OCI-LY7 (cell line): ENCODE measurements at regions of chr20 and their contacts with region 1.

Region 1: GRCh38 chr20:31684153-31685015 is 38.3 kb downstream of the BCL2L1 start:
- DNase-seq: peak; percentile 95
- H3K4me3 ChIP-seq: peak overlapping the region; percentile 49
- H3K27ac ChIP-seq: peak overlapping the region; percentile 100
- H3K4me1 ChIP-seq: peaks cover 95% of the 10 kb centered on the region
- CTCF ChIP-seq: no peak

Region 2: GRCh38 chr20:31661625-31662371 is 22.6 kb before region 1 on chr20:
- CTCF ChIA-PET with region 1: interaction called, 8 read pairs
- POLR2A ChIA-PET with region 1: interaction called, 28 read pairs
- intact Hi-C with region 1: loop called (anchors 1 kb)
- DNase-seq: peak; percentile 83
- H3K4me3 ChIP-seq: peak overlapping the region; percentile 53
- H3K27ac ChIP-seq: peak overlapping the region; percentile 64
- H3K4me1 ChIP-seq: peaks cover 37% of the 10 kb centered on the region
- CTCF ChIP-seq: peak; percentile 74

Region 3: DNA sequence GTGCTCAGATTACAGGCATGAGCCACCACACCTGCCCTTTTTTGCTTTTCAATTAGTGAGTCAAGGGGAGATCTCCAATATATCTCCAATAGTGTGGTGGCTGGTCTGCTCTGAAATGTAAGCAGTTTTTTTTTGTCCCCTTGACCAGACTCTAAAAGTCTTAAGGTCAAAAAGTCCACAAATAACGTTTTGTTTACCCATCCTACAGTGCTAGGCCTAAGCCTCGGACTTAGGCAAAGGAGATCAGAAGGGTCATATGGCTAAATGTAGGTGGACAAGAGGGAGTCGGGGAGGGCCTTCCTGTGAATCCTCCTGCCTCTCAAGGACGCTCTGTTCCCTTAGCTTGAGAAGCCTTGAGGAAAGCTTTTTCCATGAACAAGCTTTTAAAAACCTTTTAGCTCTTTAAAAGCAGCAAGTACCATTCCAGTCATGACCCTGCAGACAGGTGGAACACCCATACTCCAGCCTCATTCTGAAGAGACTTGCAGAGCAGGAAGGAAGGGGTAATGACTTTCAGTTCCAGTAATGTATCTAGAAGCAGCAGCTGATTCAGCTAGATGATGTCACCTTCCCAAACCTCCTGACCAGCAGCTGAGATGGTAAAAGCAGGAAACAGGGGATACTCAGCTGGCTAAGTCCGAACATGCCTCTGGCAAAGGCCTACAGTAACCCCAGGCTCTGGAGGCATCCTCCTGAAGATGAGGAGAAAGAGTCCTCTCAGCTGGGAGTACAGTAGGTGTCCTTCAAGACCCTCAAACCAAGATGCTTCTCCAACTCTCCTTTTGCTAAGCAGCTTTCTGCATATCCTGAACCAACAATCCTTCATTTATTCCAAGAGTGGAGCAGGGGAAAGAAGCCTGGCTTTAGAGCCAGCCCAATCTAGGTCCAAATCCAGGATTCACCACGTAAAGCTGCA is 14.7 kb after region 1 on chr20:
- CTCF ChIA-PET with region 1: interaction called, 3 read pairs
- POLR2A ChIA-PET with region 1: interaction called, 31 read pairs
- intact Hi-C with region 1: no loop called
- DNase-seq: peak; percentile 70
- H3K4me3 ChIP-seq: peak overlapping the region; percentile 37
- H3K27ac ChIP-seq: peak overlapping the region; percentile 58
- H3K4me1 ChIP-seq: peaks cover 48% of the 10 kb centered on the region
- CTCF ChIP-seq: no peak

Region 4: DNA sequence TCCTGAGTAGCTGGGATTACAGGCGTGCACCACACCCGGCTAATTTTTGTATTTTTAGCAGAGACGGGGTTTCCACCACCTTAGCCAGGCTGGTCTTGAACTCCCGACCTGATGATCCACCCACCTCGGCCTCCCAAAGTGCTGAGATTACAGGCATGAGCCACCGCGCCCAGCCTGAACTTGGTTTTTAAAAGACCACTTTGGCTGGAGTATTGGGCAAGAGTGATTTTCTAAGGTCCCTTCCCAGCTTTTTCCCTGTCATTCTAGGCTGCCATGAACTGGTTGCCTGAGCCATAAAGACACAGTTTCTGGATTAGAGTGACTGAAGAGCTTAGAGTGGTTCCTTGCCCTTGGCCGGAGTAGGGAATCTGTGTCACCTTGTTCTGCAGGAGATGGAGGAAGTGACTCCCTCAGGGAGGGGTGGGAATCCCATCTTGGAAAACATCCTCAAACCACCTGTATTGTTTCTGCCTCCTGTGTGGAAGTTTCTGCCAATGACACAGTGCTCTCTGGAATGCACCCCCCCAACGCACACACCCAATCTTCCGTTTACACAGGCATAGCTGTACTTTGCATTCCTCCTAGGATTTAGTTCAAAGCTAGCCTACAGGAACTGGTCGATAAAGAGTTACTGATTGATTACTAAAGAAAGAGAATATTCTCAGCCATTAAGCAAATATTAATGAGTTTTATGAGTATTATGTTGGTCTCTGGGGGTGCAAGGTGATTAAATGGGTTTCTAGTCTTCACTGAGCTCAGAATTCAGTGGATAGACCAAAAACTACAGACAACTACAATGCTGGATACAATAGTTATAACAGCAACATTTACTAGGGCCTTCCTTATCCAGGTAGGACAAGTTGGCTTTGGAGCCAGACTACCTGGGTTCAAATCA is 20.1 kb after region 1 on chr20:
- CTCF ChIA-PET with region 1: interaction called, 4 read pairs
- POLR2A ChIA-PET with region 1: interaction called, 43 read pairs
- intact Hi-C with region 1: loop called (anchors 1 kb)
- DNase-seq: no peak
- H3K4me3 ChIP-seq: peak overlapping the region; percentile 2
- H3K27ac ChIP-seq: peak overlapping the region; percentile 98
- H3K4me1 ChIP-seq: peaks cover 71% of the 10 kb centered on the region
- CTCF ChIP-seq: no peak

Region 5: DNA sequence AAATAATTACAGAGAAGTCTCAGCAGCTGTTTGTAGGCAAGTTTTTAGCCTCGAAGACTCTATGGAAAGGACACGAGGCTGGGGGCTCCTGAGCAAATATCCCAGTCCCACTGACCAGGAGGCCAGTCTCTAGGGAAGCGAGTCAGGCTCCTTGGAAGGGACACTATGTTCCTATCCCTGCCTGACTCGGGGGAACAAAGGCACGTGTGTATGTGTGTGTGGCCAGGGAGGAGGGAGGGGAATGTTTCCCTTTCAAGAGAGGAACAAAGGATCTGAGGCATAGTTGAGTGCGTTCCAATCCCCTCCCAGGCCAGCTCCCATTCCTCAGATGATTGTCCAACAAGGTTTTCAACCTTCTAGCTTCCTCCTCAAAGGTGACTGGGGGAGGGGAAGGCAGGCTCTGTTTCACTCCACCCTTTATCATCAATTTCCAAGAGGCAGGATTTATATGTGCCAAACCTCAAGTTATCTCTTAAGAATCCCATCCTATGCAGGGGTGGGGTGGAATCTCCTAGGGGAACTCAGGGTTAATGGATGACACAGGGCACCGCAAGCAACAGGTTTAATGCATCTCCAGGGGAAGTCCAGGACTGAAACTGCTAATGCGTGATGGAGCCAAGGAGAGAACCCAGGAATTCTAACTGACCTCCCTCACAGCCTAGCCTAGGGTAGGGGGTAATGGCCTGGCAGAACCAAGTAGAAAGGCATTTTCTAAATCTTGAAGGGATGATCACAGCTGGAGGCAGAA is 28.4 kb after region 1 on chr20:
- CTCF ChIA-PET with region 1: no interaction called
- POLR2A ChIA-PET with region 1: interaction called, 43 read pairs
- intact Hi-C with region 1: loop called (anchors 1 kb)
- DNase-seq: no peak
- H3K4me3 ChIP-seq: no peak overlapping the region
- H3K27ac ChIP-seq: peak overlapping the region; percentile 2
- H3K4me1 ChIP-seq: peaks cover 95% of the 10 kb centered on the region
- CTCF ChIP-seq: no peak

Region 6: DNA sequence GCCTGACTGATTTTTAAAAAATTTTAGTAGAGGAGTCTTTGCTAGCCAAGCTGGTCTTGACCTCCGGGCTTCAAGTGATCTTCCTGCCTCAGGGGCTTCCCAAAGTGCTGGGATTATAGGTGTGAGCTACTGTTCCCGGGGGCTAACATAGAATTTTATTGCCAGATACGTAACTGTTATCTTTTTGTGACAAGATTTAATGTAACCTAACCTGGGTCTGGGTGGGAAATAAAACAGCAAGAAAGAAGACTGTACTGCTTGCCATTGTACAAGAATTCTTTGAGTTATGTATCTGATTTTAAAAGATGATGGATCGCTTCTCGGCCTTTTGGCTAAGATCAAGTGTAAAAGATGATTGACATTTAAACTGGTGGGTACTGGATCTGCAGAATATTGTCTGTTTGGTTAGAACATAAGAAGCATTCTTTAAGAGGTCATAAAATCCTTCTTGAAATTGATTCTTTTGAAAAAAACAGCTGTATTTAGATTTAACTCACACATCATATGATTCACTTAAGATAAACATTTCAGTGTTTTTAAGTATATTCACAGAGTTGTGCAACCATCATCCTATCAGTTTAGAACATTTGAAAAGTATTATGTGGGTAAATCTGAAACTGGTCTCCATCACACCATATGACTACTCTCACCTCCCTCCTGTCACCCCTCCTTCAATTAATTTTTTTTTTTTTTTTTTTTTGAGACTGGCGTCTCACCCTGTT is 76.3 kb after region 1 on chr20:
- CTCF ChIA-PET with region 1: no interaction called
- POLR2A ChIA-PET with region 1: no interaction called
- intact Hi-C with region 1: no loop called
- DNase-seq: no peak
- H3K4me3 ChIP-seq: no peak overlapping the region
- H3K27ac ChIP-seq: no peak overlapping the region
- H3K4me1 ChIP-seq: no peaks in the 10 kb centered on the region
- CTCF ChIP-seq: no peak

Region 7: GRCh38 chr20:31788578-31788977 is 104.2 kb after region 1 on chr20:
- CTCF ChIA-PET with region 1: no interaction called
- POLR2A ChIA-PET with region 1: no interaction called
- intact Hi-C with region 1: no loop called
- DNase-seq: no peak
- H3K4me3 ChIP-seq: no peak overlapping the region
- H3K27ac ChIP-seq: no peak overlapping the region
- H3K4me1 ChIP-seq: no peaks in the 10 kb centered on the region
- CTCF ChIP-seq: peak; percentile 41

Region 8: DNA sequence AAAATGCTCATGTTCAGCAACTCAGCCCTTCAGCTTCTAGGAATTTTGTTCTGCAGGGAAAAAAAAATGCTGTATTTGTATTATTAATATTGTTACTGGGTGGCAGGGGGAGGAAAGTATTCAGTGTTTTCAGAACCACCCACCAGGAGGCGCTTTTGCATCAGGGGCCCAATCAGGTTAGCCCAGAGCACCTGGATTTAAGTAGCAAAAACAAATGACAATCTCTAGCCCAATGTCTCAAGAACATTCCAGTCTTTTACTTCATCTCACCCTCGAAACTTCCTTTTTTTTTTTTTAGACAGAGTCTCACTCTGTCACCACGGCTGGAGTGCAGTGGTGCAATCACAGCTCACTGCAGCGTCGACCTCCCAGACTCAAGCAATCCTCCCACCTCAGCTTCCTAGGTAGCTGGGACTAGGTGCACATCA is 990.0 kb after region 1 on chr20:
- CTCF ChIA-PET with region 1: interaction called, 16 read pairs
- POLR2A ChIA-PET with region 1: no interaction called
- intact Hi-C with region 1: no loop called
- DNase-seq: peak; percentile 83
- H3K4me3 ChIP-seq: no peak overlapping the region
- H3K27ac ChIP-seq: peak overlapping the region; percentile 96
- H3K4me1 ChIP-seq: peaks cover 72% of the 10 kb centered on the region
- CTCF ChIP-seq: peak; percentile 98